PC-9 (cell line): ENCODE measurements at regions of chr17 and their contacts with region 1.

Region 1: DNA sequence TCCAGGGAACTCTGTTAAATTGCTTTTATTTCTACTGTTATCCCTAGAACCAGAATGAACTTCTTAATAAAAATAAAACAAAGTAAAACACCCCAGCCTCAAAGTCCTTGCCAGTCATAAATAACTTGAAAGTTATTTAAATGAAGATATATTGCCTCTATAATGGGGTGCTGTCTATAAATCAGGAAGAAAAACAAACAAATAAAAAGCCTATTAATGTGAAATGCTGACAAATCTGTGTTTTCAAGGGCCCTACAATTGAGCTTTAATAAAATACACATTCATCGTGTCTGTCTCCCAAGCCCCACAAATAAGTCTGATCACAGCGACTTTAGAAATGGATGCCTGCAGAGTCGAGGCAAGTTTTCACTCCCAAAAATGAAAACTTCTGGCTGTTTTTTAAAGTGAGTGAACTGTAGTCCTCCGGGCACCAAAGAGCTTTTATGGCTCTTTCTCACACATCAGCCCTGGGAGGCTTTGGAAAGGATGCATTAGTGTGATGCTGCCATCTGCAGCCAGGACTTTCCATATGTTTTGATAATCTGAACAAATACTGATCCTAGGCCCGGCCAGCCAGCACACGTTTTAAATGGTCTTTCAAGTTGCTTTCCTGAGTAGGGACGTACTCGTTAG is 16.4 kb downstream of the NACA2 start:
- DNase-seq: peak; percentile 43 to 50
- H3K4me3 ChIP-seq: no peak overlapping the region
- H3K27ac ChIP-seq: no peak overlapping the region
- H3K4me1 ChIP-seq: peaks cover 16% of the 10 kb centered on the region
- H3K27me3 ChIP-seq: no peaks in the 10 kb centered on the region
- CTCF ChIP-seq: peak; percentile 65

Region 2: DNA sequence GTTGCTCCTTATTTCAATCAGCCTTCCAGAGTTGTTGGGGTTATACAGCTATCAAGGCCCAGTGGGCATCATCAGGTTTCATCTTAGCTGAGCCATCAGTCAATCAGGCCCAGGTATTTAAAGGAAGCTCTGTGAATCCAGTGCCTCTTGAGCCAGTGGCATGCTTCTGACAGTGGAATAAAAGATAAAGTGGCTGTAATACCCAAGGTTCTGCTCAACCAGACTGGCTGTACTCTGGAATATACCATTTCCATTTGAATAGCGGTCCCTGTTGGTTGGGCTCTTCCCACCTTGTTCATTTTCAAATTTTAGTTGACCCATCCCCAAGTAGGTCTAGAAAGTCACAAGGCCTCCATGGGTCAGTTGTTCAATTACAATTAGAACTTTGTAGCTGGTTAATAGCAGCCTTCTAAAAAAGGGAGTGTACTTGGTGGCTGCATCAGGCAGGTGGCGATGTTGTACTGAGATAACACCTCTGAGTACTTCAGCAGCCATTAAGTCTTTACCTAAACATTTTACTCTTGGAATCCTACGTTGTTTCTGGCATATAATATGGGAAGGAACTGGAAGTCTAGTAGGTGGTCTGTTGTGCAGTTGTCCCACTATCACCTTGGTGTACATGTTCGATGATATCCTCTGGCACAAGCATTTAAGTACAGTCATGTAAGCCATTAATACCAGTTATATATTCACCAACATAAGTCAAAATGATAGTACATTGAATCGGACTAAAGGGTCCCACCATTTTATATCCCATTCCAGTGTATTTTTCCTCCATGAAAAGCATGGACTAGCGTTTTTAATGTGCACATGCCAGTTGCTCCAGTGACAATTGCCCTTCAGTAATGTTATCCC is 602.9 kb before region 1 on chr17:
- CTCF ChIA-PET with region 1: no interaction called
- POLR2A ChIA-PET with region 1: no interaction called
- intact Hi-C with region 1: loop called (anchors 2 kb)
- DNase-seq: peak; percentile 40
- H3K4me3 ChIP-seq: no peak overlapping the region
- H3K27ac ChIP-seq: no peak overlapping the region
- H3K4me1 ChIP-seq: no peaks in the 10 kb centered on the region
- H3K27me3 ChIP-seq: no peaks in the 10 kb centered on the region
- CTCF ChIP-seq: peak; percentile 81

Region 3: DNA sequence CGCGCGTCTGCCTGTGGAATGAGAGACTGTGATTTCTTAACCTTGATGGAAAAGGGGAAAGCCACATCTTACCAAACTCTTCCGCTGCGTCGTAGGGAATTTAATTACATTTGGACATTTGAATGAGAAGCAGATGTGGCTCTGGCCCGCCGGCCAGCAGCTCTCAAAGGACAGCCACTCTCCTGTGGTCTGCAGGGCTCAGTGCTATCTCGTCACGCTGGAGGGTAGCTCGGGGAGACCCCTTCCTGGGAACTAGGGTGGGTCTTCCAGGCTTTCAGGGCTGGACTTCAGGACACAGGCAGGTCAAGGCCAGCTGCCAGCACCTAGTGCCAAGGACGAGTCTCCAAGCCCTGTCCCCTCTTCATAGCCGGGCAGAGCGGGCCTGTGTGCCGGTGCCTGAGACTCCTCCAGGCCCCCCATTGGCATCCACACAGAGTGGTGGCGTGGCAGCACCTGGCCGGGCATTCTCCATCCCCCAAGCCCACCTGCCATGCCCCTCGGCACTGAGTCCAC is 190.9 kb before region 1 on chr17:
- CTCF ChIA-PET with region 1: no interaction called
- POLR2A ChIA-PET with region 1: no interaction called
- intact Hi-C with region 1: no loop called
- DNase-seq: no peak
- H3K4me3 ChIP-seq: no peak overlapping the region
- H3K27ac ChIP-seq: no peak overlapping the region
- H3K4me1 ChIP-seq: no peaks in the 10 kb centered on the region
- H3K27me3 ChIP-seq: no peaks in the 10 kb centered on the region
- CTCF ChIP-seq: no peak

Region 4: DNA sequence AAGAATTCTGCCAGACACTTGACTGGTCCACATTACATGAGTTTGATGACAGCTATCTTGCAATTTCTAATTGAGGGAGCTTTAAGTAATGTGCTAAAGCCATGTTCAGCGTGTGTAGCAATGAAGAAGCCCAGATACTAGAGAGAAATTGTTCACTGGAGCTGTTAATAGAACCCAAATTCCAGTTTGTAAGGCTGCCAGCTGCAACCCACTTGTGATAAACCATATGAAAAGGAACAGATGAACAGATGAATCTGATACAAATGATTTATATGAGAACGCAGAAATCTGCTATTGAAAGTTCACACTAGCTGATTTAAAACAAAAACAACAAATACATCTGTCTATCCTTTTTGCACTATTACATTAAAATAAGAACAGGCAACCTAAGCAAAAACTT is 10.2 kb after region 1 on chr17:
- CTCF ChIA-PET with region 1: no interaction called
- POLR2A ChIA-PET with region 1: no interaction called
- intact Hi-C with region 1: no loop called
- DNase-seq: no peak
- H3K4me3 ChIP-seq: no peak overlapping the region
- H3K27ac ChIP-seq: no peak overlapping the region
- H3K4me1 ChIP-seq: no peaks in the 10 kb centered on the region
- H3K27me3 ChIP-seq: 0 out of 2 replicates have a peak, but pooled peaks cover 4% of the 10 kb centered on the region
- CTCF ChIP-seq: no peak